Heart left ventricle (tissue), 16 donors: ENCODE measurements at regions of chrX and their contacts with region 1.

Region 1: DNA sequence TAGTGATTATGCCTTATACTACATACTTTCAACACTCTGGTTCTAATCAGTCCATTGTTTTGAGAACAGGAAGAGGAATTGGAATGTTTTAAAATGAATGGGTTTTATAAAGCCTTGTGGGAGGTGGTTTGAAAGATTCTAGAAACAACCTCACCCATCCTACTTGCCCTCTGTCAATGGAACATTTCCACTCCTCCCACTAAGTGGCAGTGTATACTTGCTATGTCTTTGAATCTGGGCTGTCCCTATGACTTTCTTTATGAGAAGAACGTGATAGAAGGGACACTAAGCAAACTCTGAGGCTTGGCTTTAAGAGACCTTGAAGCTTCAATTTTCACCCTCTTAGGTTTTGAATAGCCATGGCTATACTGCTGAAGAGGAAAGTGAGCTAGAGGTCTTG is 611.2 kb downstream of the PPP4R3C start:
- DNase-seq: no peak
- ATAC-seq: no peak
- H3K4me3 ChIP-seq: no peak overlapping the region
- H3K27ac ChIP-seq: no peak overlapping the region
- H3K4me1 ChIP-seq: no peaks in the 10 kb centered on the region
- H3K27me3 ChIP-seq: no peaks in the 10 kb centered on the region
- CTCF ChIP-seq: peak in 6 of 12 donors; percentile 8 to 34 (median 18)
- POLR2A ChIP-seq: no peak

Region 2: DNA sequence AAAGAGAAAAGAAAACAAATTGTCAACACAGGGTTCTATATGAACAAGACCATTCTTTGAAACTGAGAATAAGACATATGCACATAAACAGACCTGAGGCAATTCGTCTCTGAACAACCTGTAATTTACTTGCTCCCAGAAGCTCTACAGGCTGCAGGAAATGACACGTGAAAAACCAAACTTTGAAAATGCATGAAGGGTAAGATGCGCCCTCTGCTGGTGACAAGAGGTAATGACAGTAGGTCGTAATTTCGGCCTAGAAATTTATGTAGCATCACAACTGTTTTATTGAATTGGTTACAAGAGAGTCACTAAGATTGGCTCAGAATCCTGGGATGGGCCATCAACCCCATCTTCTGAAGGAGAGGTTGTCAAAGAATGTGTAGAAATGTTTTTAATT is 334.7 kb after region 1 on chrX:
- intact Hi-C with region 1: loop called in 4 of 10 experiments (anchors 5 to 10 kb)
- DNase-seq: no peak
- ATAC-seq: no peak
- H3K4me3 ChIP-seq: no peak overlapping the region
- H3K27ac ChIP-seq: no peak overlapping the region
- H3K4me1 ChIP-seq: no peaks in the 10 kb centered on the region
- H3K27me3 ChIP-seq: no peaks in the 10 kb centered on the region
- CTCF ChIP-seq: peak; percentile 36 to 83 (median 60)
- POLR2A ChIP-seq: no peak